Activated T-helper 1 cell treated with anti-CD3 and anti-CD28 coated beads, Interleukin-12 subunit alpha, Interleukin-12 subunit beta, Interleukin-2, Interleukin-4 antibody, amounts not matched to agents 30 ng/mL and 10 ng/mL and 1 ng/mL, durations not matched to agents 14 hours and 24 hours and 36 hours (primary cell): ENCODE measurements at regions of chr7 and their contacts with region 1.

Region 1: DNA sequence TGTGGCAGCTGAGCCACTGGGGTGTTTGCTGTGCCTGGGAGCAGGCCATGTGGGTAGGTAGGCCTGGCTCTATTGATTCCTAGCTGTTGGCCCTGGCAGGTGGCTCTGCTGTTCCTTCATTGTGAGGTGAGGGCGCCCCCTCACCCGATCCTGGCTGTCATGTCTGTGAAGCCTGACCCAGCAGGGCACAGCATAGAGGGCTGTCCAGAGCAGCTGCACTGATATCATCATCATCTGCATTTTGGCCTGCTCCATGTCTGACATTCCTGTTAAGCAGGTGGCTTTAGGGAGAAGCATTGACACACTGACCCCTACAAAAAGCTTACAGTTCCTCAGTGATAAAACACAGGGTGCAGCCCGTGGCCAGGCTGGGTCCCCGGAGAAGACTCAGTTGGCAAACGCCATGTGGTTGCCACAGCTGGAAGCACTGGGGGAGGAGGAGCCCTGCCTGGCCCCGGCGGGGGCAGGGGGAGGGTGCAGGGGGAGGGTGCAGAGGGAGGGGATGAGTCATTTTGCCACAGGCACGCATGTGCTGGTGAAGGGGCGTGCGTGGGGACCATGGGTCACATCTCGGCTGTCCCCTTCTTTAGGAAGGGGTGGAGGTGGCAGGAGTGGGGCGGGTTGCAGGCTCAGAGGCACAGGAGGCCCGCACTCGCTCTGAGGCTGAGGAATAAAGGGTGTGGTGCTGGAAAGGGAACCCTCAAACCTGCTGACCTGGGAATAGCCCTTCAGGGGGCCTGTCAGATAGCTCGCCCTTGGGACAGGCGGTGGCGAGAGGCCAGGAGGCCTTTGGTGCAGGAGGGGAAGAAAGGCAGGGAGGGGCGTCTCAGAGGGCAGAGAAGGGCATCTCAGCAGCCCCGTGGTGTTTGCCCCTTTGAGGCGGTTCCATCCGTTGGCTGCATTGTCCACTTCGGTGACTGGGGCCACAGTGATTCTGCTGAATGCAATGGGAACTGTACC is 31.6 kb downstream of the IKZF1 start:
- DNase-seq: peak; percentile 71
- H3K4me3 Mint-ChIP-seq: no peak overlapping the region
- H3K27ac Mint-ChIP-seq: no peak overlapping the region
- H3K4me1 Mint-ChIP-seq: peaks cover 33% of the 10 kb centered on the region
- H3K27me3 Mint-ChIP-seq: no peaks in the 10 kb centered on the region

Region 2: DNA sequence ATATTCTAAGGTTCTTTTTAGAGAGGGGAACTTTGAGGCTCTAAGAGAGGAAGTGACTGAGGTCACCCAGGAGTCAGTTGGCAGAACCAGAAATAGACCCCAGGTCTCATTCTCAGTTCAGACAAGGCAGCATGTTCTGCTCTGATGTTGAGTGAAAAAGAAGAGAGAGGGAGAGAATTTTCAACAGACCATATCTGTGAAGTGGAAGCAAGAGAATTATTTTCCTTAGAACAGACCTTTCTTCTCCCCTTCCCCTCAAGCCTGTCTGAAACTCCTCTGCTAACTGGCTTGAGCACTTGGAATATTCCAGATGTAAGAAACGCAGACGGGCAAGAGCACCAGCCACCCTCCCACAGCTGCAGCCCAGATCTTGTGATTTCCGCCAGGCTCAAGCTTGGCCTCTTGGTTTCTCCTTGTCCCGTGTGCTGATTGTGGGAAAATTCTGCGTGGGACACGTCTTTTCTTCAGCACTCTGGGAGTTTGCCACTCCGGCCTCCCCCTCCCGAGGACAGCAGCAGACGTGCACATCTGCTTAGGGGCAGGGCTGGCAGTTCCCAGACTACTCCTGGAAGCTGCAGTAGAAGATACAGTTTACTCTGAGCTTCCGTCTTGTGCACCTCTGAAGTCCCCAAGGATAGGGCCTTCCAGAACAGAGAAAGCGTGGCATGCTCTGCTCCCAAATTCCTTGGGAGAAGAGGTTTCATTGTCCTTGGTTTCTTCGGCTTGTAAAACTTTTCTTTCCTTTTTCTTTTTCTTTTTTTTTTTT is 54.2 kb before region 1 on chr7:
- intact Hi-C with region 1: no loop called
- DNase-seq: no peak
- H3K4me3 Mint-ChIP-seq: peak overlapping the region; percentile 46
- H3K27ac Mint-ChIP-seq: no peak overlapping the region
- H3K4me1 Mint-ChIP-seq: peaks cover 48% of the 10 kb centered on the region
- H3K27me3 Mint-ChIP-seq: no peaks in the 10 kb centered on the region

Region 3: DNA sequence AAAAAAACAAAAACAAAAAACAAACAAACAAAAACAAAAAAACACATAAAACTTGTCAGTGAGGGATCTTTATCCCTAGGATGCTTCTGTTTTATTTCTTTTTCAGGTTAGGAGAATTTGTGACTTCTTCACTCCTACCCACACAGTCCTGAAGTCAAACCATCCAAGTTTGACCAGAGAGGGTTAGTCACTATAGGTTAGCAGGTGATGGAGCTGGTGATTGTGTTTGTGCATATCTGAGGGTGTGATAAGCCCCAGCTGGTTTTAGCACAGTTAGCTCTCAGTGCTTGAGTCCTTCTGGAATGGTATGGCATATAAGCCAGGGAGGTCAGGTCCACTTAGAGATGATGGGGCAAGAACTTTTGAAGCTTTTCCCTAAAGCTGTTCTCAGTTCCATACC is 43.3 kb before region 1 on chr7:
- intact Hi-C with region 1: loop called (anchors 1 kb)
- DNase-seq: no peak
- H3K4me3 Mint-ChIP-seq: no peak overlapping the region
- H3K27ac Mint-ChIP-seq: peak overlapping the region; percentile 24
- H3K4me1 Mint-ChIP-seq: peaks cover 35% of the 10 kb centered on the region
- H3K27me3 Mint-ChIP-seq: peaks cover 8% of the 10 kb centered on the region

Region 4: GRCh38 chr7:50317221-50317678 is 18.8 kb before region 1 on chr7:
- intact Hi-C with region 1: loop called (anchors 1 kb)
- DNase-seq: peak; percentile 53
- H3K4me3 Mint-ChIP-seq: peak overlapping the region; percentile 82
- H3K27ac Mint-ChIP-seq: peak overlapping the region; percentile 93
- H3K4me1 Mint-ChIP-seq: peaks cover 100% of the 10 kb centered on the region
- H3K27me3 Mint-ChIP-seq: no peaks in the 10 kb centered on the region

Region 5: DNA sequence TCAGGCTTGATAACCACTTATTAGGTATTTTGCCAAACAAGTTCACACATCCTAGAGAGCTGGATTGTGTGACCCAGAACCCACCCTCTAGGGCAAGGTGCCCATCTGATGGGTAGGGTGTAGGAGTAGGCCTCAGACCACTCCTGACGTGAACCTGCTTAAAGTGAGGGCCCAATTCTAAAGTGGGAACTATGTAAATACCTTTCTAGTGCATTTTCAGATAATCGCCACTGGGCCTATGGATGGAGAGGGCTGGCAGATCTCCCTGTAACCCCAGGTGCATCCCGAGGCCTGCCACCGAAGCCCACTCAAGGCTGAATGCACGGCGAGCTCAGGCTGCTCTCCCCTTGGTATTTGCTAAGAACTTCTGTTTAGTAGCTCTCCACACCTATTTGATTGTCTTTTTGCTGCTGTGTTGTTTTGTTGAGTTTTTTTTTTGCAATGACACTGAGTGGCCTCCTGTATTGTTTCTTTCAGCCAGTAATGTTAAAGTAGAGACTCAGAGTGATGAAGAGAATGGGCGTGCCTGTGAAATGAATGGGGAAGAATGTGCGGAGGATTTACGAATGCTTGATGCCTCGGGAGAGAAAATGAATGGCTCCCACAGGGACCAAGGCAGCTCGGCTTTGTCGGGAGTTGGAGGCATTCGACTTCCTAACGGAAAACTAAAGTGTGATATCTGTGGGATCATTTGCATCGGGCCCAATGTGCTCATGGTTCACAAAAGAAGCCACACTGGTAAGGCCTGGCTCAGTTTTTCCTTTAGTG is 40.2 kb after region 1 on chr7:
- intact Hi-C with region 1: no loop called
- DNase-seq: no peak
- H3K4me3 Mint-ChIP-seq: no peak overlapping the region
- H3K27ac Mint-ChIP-seq: peak overlapping the region; percentile 91
- H3K4me1 Mint-ChIP-seq: peaks cover 98% of the 10 kb centered on the region
- H3K27me3 Mint-ChIP-seq: no peaks in the 10 kb centered on the region